Activated T-helper 1 cell treated with anti-CD3 and anti-CD28 coated beads, Interleukin-12 subunit alpha, Interleukin-12 subunit beta, Interleukin-2, Interleukin-4 antibody, amounts not matched to agents 30 ng/mL and 10 ng/mL and 1 ng/mL, durations not matched to agents 14 hours and 24 hours and 36 hours (primary cell): ENCODE measurements at regions of chr3 and their contacts with region 1.

Region 1: DNA sequence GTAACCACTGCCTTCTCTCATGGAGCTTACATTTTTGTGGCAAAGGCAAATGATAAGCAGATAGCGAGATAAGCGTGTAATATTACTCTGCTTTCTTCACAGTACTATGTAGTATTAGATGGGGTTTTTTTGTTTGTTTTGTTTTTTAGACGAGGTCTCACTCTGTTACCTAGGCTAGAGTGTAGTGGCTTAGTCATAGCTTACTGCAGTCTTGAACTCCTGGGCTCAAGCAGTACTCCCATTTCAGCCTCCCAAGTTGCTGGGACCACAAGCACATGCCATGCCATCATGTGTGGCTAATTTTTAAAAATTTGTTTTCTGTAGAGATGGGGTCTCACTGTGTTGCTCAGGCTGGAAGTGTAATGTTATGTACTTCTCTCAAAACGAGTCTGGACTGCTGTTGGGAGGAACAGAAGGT is 22.9 kb downstream of the MBNL1 start:
- DNase-seq: no peak
- H3K4me3 Mint-ChIP-seq: peak overlapping the region; percentile 23
- H3K27ac Mint-ChIP-seq: peak overlapping the region; percentile 56
- H3K4me1 Mint-ChIP-seq: peaks cover 75% of the 10 kb centered on the region
- H3K27me3 Mint-ChIP-seq: no peaks in the 10 kb centered on the region

Region 2: DNA sequence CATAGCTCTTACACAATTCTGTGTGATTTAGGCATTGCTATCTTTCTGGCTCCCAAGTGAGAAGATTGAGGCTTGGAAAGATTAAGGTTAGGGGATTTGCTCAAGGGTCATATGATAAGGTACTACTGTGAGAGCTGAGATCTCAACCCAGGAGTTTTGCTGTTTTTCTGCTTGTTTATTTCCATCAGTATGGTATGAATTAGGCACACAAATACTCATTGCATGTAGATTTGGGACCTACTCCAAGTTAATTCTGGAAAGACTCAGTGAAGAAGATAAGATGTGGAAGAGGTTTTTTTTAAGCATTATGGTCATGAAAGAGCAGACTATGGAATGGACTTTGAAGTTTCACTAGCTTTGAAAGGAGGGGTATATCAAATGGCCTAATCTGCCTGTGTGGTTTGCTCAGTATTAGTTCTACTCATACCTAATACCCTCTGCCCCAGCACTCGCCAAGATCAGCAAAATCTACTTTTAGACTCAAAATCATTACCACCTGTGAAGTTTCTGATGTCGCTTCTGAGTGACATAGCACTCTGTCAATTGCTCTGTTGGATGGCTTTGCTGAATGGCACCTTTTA is 10.4 kb before region 1 on chr3:
- intact Hi-C with region 1: loop called (anchors 1 kb)
- DNase-seq: no peak
- H3K4me3 Mint-ChIP-seq: peak overlapping the region; percentile 64
- H3K27ac Mint-ChIP-seq: peak overlapping the region; percentile 87
- H3K4me1 Mint-ChIP-seq: peaks cover 85% of the 10 kb centered on the region
- H3K27me3 Mint-ChIP-seq: no peaks in the 10 kb centered on the region